ENCODE measurements at regions of chr1 and their contacts with region 1.

Region 1: DNA sequence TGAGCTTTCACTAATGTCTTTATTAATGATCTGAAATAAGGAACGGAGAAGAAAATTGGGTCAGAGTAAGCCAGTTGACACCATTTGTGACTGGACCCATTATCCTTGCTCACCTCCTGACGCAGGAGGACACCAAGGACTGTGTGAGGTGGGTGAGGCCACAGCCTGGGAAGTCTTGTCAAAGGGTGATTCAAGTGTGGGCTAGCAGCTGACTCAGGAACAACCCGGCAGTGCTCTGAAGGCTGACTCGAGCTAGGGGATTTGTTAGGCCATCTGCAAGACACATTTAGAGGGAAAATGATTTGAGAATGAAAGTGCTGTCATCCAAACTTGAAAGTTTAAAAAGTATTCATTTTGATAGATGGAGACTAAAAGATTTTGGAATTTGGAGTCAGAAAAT is 21.2 kb downstream of the PRRX1 start:
- DNase-seq: no peak
- ATAC-seq: no peak
- H3K4me3 ChIP-seq: no peak overlapping the region
- H3K27ac ChIP-seq: no peak overlapping the region
- H3K4me1 ChIP-seq: no peaks in the 10 kb centered on the region
- H3K27me3 ChIP-seq: no peaks in the 10 kb centered on the region
- CTCF ChIP-seq: no peak
- POLR2A ChIP-seq: no peak
- RAD21 ChIP-seq: no peak

Region 2: GRCh38 chr1:170640581-170640980 is 44.6 kb before region 1 on chr1:
- CTCF ChIA-PET with region 1: no interaction called
- POLR2A ChIA-PET with region 1: no interaction called
- RAD21 ChIA-PET with region 1: no interaction called
- intact Hi-C with region 1: no loop called
- DNase-seq: no peak
- ATAC-seq: no peak
- H3K4me3 ChIP-seq: no peak overlapping the region
- H3K27ac ChIP-seq: no peak overlapping the region
- H3K4me1 ChIP-seq: no peaks in the 10 kb centered on the region
- H3K27me3 ChIP-seq: no peaks in the 10 kb centered on the region
- CTCF ChIP-seq: no peak
- POLR2A ChIP-seq: no peak
- RAD21 ChIP-seq: no peak

Region 3: DNA sequence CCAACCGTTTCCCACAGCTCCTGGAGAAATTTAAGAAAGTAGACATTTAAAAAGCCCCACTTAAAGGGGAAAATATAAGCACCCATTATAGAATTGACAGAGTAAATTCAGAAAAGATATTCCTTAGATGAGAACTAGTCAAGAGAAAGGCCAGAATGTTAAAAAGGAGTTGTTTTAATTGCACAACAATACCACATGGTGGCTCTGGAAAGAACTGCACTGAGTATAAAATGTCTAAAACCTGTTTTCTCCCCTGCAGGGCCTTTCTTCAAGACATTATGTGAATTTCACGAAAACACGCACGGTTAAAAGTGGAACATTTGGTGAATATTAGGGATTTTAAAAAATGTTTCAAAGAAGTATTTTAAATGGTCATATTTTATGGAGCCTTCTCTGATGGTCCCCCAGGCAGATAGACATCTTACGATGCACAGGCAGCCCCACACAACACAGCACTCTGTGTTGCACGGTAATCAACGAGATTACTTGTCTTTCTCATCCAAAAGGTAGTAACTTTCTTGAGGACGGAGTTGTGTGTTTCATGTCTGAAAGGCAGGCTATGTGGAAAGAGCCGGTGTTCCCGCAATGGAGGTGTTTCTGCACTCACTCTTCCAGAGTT is 80.7 kb after region 1 on chr1:
- CTCF ChIA-PET with region 1: interaction called, 13 read pairs
- POLR2A ChIA-PET with region 1: no interaction called
- RAD21 ChIA-PET with region 1: interaction called in 1 of 2 experiments, 4 read pairs
- intact Hi-C with region 1: loop called (anchors 2 kb)
- DNase-seq: peak; percentile 21
- ATAC-seq: peak; percentile 73
- H3K4me3 ChIP-seq: no peak overlapping the region
- H3K27ac ChIP-seq: no peak overlapping the region
- H3K4me1 ChIP-seq: no peaks in the 10 kb centered on the region
- H3K27me3 ChIP-seq: no peaks in the 10 kb centered on the region
- CTCF ChIP-seq: peak; percentile 31 to 64 (median 61); a peak in 5 of 6 replicates
- POLR2A ChIP-seq: no peak
- RAD21 ChIP-seq: peak; percentile 79

Region 4: GRCh38 chr1:170881268-170882265 is 196.4 kb after region 1 on chr1:
- CTCF ChIA-PET with region 1: interaction called, 4 read pairs
- POLR2A ChIA-PET with region 1: no interaction called
- RAD21 ChIA-PET with region 1: interaction called in 1 of 2 experiments, 4 read pairs
- intact Hi-C with region 1: loop called (anchors 2 kb)
- DNase-seq: peak; percentile 37
- ATAC-seq: peak; percentile 89
- H3K4me3 ChIP-seq: no peak overlapping the region
- H3K27ac ChIP-seq: no peak overlapping the region
- H3K4me1 ChIP-seq: no peaks in the 10 kb centered on the region
- H3K27me3 ChIP-seq: no peaks in the 10 kb centered on the region
- CTCF ChIP-seq: peak; percentile 41 to 90 (median 68)
- POLR2A ChIP-seq: no peak
- RAD21 ChIP-seq: peak; percentile 88